ENCODE measurements at regions of chr6 and their contacts with region 1.

Region 1: DNA sequence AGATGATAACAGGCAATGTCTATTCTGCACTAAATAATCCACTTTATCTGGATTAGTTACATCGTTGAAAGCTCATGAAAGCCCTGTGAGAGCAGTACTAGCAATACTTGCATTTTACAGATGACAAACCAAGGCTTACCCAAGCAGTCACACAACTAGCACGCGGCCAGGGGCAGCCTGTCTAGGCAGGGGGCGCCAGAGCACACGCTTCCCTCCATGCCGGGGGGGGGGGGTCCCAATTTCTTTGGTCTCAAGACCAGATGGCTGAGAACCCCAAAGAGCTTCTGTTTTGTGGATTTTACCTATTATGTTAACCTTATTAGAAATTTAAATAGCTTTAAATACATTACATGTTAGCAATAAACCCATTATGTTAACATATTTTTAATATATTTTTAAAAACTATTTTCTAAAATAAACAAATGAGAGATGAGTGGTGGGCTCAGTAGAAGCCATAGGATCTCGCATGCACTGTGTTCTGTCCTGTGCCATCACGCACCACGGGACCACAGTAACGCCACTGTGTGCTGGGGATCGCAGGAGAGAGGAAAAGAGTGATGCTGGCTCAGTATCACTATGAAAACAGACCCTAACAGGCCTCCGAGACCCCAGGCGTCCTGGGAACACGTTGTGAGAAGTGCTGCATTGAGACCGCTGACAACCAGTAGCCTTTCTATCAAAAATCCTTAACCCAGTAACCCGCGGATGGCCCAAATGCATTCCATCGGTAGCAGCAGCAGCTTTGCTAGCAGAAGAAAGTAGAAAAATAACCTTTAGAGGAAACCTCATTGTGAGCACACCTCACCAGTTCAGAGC is 5.3 kb upstream of the PRR18 start:
- DNase-seq: peak in 2 of 3 donors; percentile 73 to 79
- ATAC-seq: peak in 1 of 2 donors; percentile 68
- H3K4me3 ChIP-seq: no peak overlapping the region
- H3K27ac ChIP-seq: no peak overlapping the region
- H3K4me1 ChIP-seq: no peaks in the 10 kb centered on the region
- H3K27me3 ChIP-seq: no peaks in the 10 kb centered on the region

Region 2: DNA sequence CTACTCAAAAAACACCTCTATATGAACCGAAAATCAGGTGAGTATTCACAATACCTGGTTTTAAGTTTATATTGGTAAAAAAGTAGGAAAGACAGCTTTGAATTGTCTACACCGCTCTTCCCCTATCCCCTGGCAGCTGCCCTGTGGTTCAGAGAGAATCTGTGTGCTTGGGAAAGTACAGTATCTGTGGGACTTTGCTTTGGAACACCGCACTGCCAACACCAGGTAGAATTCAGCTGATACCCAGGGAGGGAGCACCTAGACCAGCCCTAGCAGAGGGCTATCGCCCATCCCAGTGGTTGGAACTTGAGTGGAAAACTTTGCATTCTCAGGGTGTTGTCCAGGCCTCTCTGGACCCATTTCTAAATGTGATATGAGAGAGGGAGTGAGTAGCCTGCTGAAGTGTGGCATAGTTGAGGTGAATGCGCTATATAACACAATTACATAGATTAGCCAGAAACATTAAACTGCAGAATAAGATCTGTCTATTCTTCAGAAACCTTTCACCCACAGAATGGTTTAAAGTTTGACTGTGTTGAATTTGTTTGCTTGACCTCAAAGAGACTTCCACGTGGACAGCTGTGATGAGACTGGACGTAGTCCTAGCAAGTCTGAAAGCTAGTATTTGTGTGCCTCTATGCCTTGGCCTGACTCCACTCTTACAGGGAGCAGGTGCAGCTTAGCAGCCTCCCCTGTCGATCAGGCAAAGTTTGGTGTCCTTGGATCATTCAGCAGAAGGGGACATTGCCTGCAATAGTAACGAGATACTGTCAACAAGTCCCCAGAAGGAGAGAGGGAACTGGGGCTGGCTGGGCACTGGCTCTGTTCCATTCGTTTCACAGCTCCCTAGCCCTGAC is 80.8 kb after region 1 on chr6:
- intact Hi-C with region 1: loop called in 2 of 4 experiments (anchors 5 to 10 kb)
- DNase-seq: no peak
- ATAC-seq: no peak
- H3K4me3 ChIP-seq: no peak overlapping the region
- H3K27ac ChIP-seq: no peak overlapping the region
- H3K4me1 ChIP-seq: no peaks in the 10 kb centered on the region
- H3K27me3 ChIP-seq: no peaks in the 10 kb centered on the region

Measured in right cardiac atrium (tissue), 5 donors.